Activated CD4-positive, alpha-beta T cell treated with anti-CD3 and anti-CD28 coated beads for 36 hours (primary cell): ENCODE measurements at regions of chr12 and their contacts with region 1.

Region 1: DNA sequence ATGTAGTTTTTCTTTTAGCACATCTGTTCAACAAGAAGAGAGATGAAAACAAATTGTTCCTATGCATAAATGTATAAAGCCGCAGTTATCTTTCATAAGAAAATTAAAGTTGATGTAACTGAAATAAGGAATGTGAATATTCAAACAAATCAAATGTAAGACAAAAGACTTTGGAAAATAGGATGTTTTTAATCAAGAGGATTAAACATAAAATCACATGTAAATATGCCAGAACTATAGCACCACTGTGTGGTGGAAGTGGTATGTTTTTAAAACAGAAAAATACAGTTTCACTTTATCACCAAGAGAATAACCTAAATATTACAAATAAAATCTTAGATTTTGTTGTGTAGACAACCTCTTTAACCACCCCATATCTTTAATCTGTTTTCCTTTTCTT is 40.4 kb downstream of the CAPS2 start:
- DNase-seq: no peak
- ATAC-seq: no peak
- H3K4me3 Mint-ChIP-seq: no peak overlapping the region
- H3K27ac Mint-ChIP-seq: no peak overlapping the region
- H3K4me1 Mint-ChIP-seq: no peaks in the 10 kb centered on the region
- H3K27me3 Mint-ChIP-seq: no peaks in the 10 kb centered on the region

Region 2: DNA sequence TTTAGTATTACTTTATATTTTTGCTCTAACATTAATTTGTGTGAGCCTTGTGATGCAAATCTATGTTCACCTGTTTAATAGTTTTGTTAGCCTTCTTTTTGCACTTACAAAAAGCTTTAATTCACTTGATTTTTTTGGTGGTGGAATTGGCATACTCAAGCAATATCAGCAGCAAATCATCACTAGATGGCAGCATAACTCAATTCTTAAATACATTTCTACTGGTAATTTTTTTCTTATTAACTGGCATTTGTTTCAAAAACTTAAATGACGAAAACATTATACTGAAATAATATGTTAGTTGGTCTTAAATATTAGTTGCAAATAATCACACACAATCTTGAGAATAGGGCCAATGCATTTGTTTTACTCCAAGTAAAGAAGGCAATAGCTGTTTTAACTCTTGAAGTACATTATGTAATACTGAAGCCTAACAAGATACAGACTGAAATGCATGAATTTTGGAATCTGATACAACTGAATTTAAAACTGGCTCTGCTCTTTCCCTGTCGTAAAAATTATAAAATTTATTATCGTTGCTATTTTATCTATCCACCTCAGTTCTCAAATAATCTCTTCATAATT is 600.6 kb before region 1 on chr12:
- CTCF ChIA-PET with region 1: interaction called, 4 read pairs
- POLR2A ChIA-PET with region 1: no interaction called
- intact Hi-C with region 1: loop called (anchors 1 to 5 kb)
- DNase-seq: no peak
- ATAC-seq: no peak
- H3K4me3 Mint-ChIP-seq: no peak overlapping the region
- H3K27ac Mint-ChIP-seq: no peak overlapping the region
- H3K4me1 Mint-ChIP-seq: no peaks in the 10 kb centered on the region
- H3K27me3 Mint-ChIP-seq: peaks cover 5% of the 10 kb centered on the region

Region 3: GRCh38 chr12:74801625-74802024 is 488.1 kb before region 1 on chr12:
- CTCF ChIA-PET with region 1: no interaction called
- POLR2A ChIA-PET with region 1: no interaction called
- intact Hi-C with region 1: loop called in 1 of 2 experiments (anchors 2 kb)
- DNase-seq: no peak
- ATAC-seq: no peak
- H3K4me3 Mint-ChIP-seq: no peak overlapping the region
- H3K27ac Mint-ChIP-seq: no peak overlapping the region
- H3K4me1 Mint-ChIP-seq: no peaks in the 10 kb centered on the region
- H3K27me3 Mint-ChIP-seq: no peaks in the 10 kb centered on the region

Region 4: GRCh38 chr12:75305412-75306332 is 15.9 kb after region 1 on chr12:
- CTCF ChIA-PET with region 1: no interaction called
- POLR2A ChIA-PET with region 1: no interaction called
- intact Hi-C with region 1: loop called in 1 of 2 experiments (anchors 2 kb)
- DNase-seq: no peak
- ATAC-seq: no peak
- H3K4me3 Mint-ChIP-seq: no peak overlapping the region
- H3K27ac Mint-ChIP-seq: no peak overlapping the region
- H3K4me1 Mint-ChIP-seq: no peaks in the 10 kb centered on the region
- H3K27me3 Mint-ChIP-seq: no peaks in the 10 kb centered on the region

Region 5: GRCh38 chr12:75452675-75453330 is 163.1 kb after region 1 on chr12:
- CTCF ChIA-PET with region 1: no interaction called
- POLR2A ChIA-PET with region 1: no interaction called
- intact Hi-C with region 1: no loop called
- DNase-seq: no peak
- ATAC-seq: no peak
- H3K4me3 Mint-ChIP-seq: no peak overlapping the region
- H3K27ac Mint-ChIP-seq: no peak overlapping the region
- H3K4me1 Mint-ChIP-seq: peaks cover 14% of the 10 kb centered on the region
- H3K27me3 Mint-ChIP-seq: no peaks in the 10 kb centered on the region

Region 6: DNA sequence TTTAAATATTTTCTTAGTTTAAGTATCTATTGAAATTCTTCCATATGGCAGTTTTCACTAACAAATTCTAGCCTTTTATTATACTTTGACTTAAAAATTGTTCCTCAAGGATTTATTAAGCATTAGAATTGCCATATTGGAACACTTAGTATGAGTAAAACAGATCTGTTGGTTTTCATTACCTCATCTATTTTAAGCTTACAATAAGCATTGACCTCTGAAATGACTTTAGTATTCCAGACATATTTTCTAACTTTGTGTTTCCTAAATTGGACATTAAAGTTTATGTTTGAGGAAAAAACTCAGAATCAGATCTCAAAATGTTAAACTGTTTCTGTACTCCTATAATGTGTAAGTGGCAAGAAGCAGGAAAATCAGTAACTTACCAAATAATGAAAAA is 1540.7 kb after region 1 on chr12:
- CTCF ChIA-PET with region 1: no interaction called
- POLR2A ChIA-PET with region 1: no interaction called
- intact Hi-C with region 1: no loop called
- DNase-seq: no peak
- ATAC-seq: no peak
- H3K4me3 Mint-ChIP-seq: no peak overlapping the region
- H3K27ac Mint-ChIP-seq: no peak overlapping the region
- H3K4me1 Mint-ChIP-seq: no peaks in the 10 kb centered on the region
- H3K27me3 Mint-ChIP-seq: no peaks in the 10 kb centered on the region